PC-9 (cell line): ENCODE measurements at regions of chr22 and their contacts with region 1.

Region 1: DNA sequence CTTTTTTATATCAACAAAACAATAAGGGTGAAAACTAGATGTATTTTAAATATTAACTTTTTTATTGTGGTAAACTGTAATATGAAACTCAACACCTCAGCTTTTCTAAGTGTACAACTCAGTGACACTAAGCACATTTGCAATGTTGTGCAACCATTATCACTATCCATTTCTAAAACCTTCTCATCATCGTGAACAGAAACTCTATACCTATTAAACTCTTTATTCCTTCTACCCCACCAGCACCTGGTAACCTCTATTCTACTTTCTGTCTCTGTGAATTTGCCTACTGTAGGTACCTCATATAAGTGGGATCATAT is 9.4 kb downstream of the HORMAD2 start:
- DNase-seq: no peak
- H3K4me3 ChIP-seq: no peak overlapping the region
- H3K27ac ChIP-seq: peak overlapping the region; percentile 38
- H3K4me1 ChIP-seq: peaks cover 31% of the 10 kb centered on the region
- H3K27me3 ChIP-seq: no peaks in the 10 kb centered on the region
- CTCF ChIP-seq: no peak

Region 2: DNA sequence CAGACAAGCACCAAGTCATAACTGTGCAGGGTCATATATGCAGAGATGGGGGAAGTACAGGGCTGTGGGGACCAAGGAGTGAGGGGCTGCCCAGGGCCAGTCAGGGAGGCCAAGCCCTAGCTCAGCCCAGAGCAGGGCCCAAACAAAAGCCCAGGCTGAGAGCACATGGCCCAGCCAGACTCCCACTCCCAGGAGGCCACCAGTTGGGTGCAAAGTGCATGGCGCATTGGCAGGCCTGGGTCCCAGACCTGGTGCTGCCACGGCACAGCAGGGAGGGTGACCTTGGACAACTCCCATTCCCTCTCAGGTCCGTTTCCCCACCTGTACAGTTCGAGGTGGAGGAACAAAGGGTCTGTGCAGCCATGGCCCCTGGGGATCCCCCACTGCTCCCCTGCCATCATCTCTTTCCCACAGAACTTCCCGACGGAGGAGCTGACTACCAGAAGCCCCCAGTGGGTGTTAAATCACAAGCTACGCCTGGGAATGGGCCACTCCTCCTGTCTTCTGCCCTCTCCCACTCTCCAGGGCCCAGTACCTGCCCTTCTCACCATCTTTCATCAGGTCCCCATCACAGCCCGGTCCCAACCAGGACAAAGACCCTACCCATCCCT is 509.3 kb before region 1 on chr22:
- CTCF ChIA-PET with region 1: no interaction called
- POLR2A ChIA-PET with region 1: no interaction called
- intact Hi-C with region 1: loop called (anchors 5 kb)
- DNase-seq: no peak
- H3K4me3 ChIP-seq: peak overlapping the region; percentile 96
- H3K27ac ChIP-seq: no peak overlapping the region
- H3K4me1 ChIP-seq: peaks cover 17% of the 10 kb centered on the region
- H3K27me3 ChIP-seq: no peaks in the 10 kb centered on the region
- CTCF ChIP-seq: no peak

Region 3: GRCh38 chr22:29635734-29636357 is 453.8 kb before region 1 on chr22:
- CTCF ChIA-PET with region 1: interaction called, 7 read pairs
- POLR2A ChIA-PET with region 1: no interaction called
- intact Hi-C with region 1: loop called (anchors 1 kb)
- DNase-seq: peak in 1 of 2 experiments; percentile 71
- H3K4me3 ChIP-seq: no peak overlapping the region
- H3K27ac ChIP-seq: no peak overlapping the region
- H3K4me1 ChIP-seq: 0 out of 2 replicates have a peak, but pooled peaks cover 4% of the 10 kb centered on the region
- H3K27me3 ChIP-seq: no peaks in the 10 kb centered on the region
- CTCF ChIP-seq: peak; percentile 83